ENCODE measurements at regions of chr22 and their contacts with region 1.

Region 1: GRCh38 chr22:26461188-26461810 is 22.3 kb downstream of the HPS4 start:
- DNase-seq: no peak
- ATAC-seq: peak; percentile 76
- H3K4me3 ChIP-seq: no peak overlapping the region
- H3K27ac ChIP-seq: no peak overlapping the region
- H3K4me1 ChIP-seq: no peaks in the 10 kb centered on the region
- H3K27me3 ChIP-seq: no peaks in the 10 kb centered on the region
- CTCF ChIP-seq: peak; percentile 69 to 82 (median 81)
- EP300 ChIP-seq: no peak
- POLR2A ChIP-seq: no peak
- RAD21 ChIP-seq: peak; percentile 68

Region 2: GRCh38 chr22:26364066-26365015 is 97.0 kb before region 1 on chr22:
- CTCF ChIA-PET with region 1: interaction called, 124 read pairs
- POLR2A ChIA-PET with region 1: no interaction called
- RAD21 ChIA-PET with region 1: interaction called, 10 read pairs
- SMC1A ChIA-PET with region 1: interaction called, 51 read pairs
- in situ Hi-C with region 1: loop called (anchors 5 kb)
- intact Hi-C with region 1: loop called (anchors 1 kb)
- DNase-seq: peak; percentile 27
- ATAC-seq: peak; percentile 96
- H3K4me3 ChIP-seq: no peak overlapping the region
- H3K27ac ChIP-seq: no peak overlapping the region
- H3K4me1 ChIP-seq: no peaks in the 10 kb centered on the region
- H3K27me3 ChIP-seq: no peaks in the 10 kb centered on the region
- CTCF ChIP-seq: peak; percentile 72 to 78 (median 75)
- EP300 ChIP-seq: no peak
- POLR2A ChIP-seq: no peak
- RAD21 ChIP-seq: peak; percentile 80

Region 3: GRCh38 chr22:26398741-26399153 is 62.6 kb before region 1 on chr22:
- CTCF ChIA-PET with region 1: interaction called, 111 read pairs
- POLR2A ChIA-PET with region 1: no interaction called
- RAD21 ChIA-PET with region 1: interaction called, 11 read pairs
- SMC1A ChIA-PET with region 1: interaction called, 73 read pairs
- in situ Hi-C with region 1: loop called (anchors 5 kb)
- intact Hi-C with region 1: loop called (anchors 1 kb)
- DNase-seq: no peak
- ATAC-seq: peak; percentile 95
- H3K4me3 ChIP-seq: no peak overlapping the region
- H3K27ac ChIP-seq: no peak overlapping the region
- H3K4me1 ChIP-seq: no peaks in the 10 kb centered on the region
- H3K27me3 ChIP-seq: no peaks in the 10 kb centered on the region; a peak in 2 of 4 replicates
- CTCF ChIP-seq: peak; percentile 70 to 81 (median 73)
- EP300 ChIP-seq: no peak
- POLR2A ChIP-seq: no peak
- RAD21 ChIP-seq: peak; percentile 83

Region 4: GRCh38 chr22:26429458-26430286 is 31.6 kb before region 1 on chr22:
- CTCF ChIA-PET with region 1: interaction called, 26 read pairs
- POLR2A ChIA-PET with region 1: no interaction called
- RAD21 ChIA-PET with region 1: interaction called, 10 read pairs
- SMC1A ChIA-PET with region 1: interaction called, 14 read pairs
- in situ Hi-C with region 1: no loop called
- intact Hi-C with region 1: no loop called
- DNase-seq: no peak
- ATAC-seq: no peak
- H3K4me3 ChIP-seq: peak overlapping the region; percentile 92
- H3K27ac ChIP-seq: peak overlapping the region; percentile 41
- H3K4me1 ChIP-seq: peaks cover 36% of the 10 kb centered on the region
- H3K27me3 ChIP-seq: no peaks in the 10 kb centered on the region
- CTCF ChIP-seq: no peak
- EP300 ChIP-seq: no peak
- POLR2A ChIP-seq: no peak
- RAD21 ChIP-seq: no peak

Region 5: GRCh38 chr22:26483439-26484359 is 22.4 kb after region 1 on chr22 and contains the starts of genes HPS4 and SRRD:
- CTCF ChIA-PET with region 1: interaction called, 47 read pairs
- POLR2A ChIA-PET with region 1: no interaction called
- RAD21 ChIA-PET with region 1: interaction called, 4 read pairs
- SMC1A ChIA-PET with region 1: interaction called, 17 read pairs
- in situ Hi-C with region 1: no loop called
- intact Hi-C with region 1: no loop called
- DNase-seq: peak; percentile 56
- ATAC-seq: peak; percentile 79
- H3K4me3 ChIP-seq: peak within 1 kb of the TSS; percentile 97
- H3K27ac ChIP-seq: peak within 1 kb of the TSS; percentile 88
- H3K4me1 ChIP-seq: peaks cover 23% of the 10 kb centered on the region
- H3K27me3 ChIP-seq: no peaks in the 10 kb centered on the region
- CTCF ChIP-seq: no peak
- EP300 ChIP-seq: peak; percentile 12 to 19; a peak in 1 of 4 replicates
- POLR2A ChIP-seq: peak; percentile 95
- RAD21 ChIP-seq: no peak
- polyA plus RNA-seq, gene HPS4: 11.7 to 12.3 TPM
- polyA plus RNA-seq, gene SRRD: 4.1 to 15.4 TPM